ENCODE measurements at regions of chr12 and their contacts with region 1.

Region 1: DNA sequence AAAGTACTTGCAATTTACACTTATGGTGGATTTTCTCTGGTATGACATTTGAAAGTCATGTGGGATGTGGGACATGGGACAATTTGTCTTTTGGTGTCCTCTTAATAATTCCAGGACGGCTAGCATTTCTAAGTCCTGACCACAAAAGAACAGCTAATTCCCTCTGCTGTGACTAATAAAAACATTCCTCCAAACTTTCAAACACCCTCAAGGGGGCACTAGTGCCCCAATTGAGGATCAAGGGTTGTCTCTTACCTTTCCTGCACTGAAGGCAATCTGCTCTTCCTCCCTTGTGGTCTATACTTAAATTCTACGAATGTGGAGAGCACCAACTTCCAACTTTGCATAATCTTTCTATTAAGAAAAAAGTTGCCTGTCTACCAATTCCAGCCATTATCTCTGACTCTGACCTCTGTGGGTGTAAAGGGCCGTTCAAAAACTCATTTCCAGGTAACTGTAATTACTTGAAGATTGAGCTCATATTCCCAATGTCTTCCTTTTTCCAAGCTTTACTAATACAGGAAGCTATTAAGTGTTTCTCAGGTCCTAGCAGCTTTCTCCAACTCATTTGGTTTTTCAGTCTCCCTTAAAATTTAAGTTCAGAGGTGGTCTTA is 210.2 kb downstream of the PTPRO start:
- DNase-seq: peak; percentile 61
- H3K4me3 Mint-ChIP-seq: no peak overlapping the region
- H3K27ac Mint-ChIP-seq: no peak overlapping the region
- H3K4me1 Mint-ChIP-seq: peaks cover 9% of the 10 kb centered on the region
- H3K27me3 Mint-ChIP-seq: peaks cover 10% of the 10 kb centered on the region

Region 2: DNA sequence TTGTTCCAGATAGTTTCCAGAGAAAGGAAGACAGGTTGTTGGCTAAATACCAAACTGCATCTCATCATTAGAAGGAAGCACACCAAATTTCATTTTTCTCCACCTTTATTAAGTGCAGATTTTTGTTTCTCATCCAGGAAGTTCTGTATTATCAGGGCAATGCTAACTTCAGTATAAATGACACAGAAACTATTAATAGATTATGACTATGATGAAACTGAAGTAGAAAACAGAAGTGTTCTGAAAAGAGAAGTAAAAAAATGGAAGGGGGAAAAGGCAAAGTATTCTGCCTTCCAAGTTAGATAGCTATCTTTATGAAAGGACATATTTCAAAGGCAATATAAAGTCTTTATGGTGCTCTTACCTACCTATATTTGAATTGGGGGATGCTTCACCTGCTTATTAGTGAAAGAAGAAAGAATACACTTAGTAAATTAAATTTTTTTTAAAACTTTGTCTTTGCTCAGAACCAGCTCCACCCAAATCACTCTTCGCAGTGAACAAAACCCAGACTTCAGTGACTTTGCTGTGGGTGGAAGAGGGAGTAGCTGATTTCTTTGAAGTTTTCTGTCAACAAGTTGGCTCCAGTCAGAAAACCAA is 13.7 kb after region 1 on chr12:
- CTCF ChIA-PET with region 1: interaction called, 41 read pairs
- POLR2A ChIA-PET with region 1: interaction called, 10 read pairs
- DNase-seq: no peak
- H3K4me3 Mint-ChIP-seq: no peak overlapping the region
- H3K27ac Mint-ChIP-seq: peak overlapping the region; percentile 63
- H3K4me1 Mint-ChIP-seq: peaks cover 19% of the 10 kb centered on the region
- H3K27me3 Mint-ChIP-seq: peaks cover 2% of the 10 kb centered on the region

Region 3: DNA sequence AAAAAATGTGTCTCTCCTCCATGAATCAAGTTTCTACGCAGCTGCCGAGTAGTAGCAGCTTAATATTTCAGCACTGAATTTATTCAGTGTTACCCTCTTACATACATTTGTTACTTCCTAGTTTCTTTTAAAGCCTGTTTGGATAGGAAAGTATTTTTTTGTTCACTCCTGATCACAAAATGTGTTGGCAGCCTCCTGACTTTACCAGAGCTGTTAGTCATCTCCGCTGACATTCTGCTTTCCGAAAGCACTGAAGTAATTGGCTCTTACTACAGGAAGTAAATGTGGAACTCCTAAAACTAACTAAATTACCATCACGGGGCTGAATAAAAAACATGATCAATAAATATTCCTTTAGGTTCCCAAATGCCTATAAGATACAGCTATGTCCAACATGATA is 31.2 kb after region 1 on chr12:
- CTCF ChIA-PET with region 1: interaction called, 23 read pairs
- POLR2A ChIA-PET with region 1: interaction called, 24 read pairs
- DNase-seq: peak; percentile 32
- H3K4me3 Mint-ChIP-seq: peak overlapping the region; percentile 64
- H3K27ac Mint-ChIP-seq: peak overlapping the region; percentile 94
- H3K4me1 Mint-ChIP-seq: peaks cover 62% of the 10 kb centered on the region
- H3K27me3 Mint-ChIP-seq: no peaks in the 10 kb centered on the region

Region 4: GRCh38 chr12:15575671-15576541 is 43.4 kb after region 1 on chr12:
- CTCF ChIA-PET with region 1: interaction called, 373 read pairs
- POLR2A ChIA-PET with region 1: interaction called, 24 read pairs
- DNase-seq: no peak
- H3K4me3 Mint-ChIP-seq: no peak overlapping the region
- H3K27ac Mint-ChIP-seq: no peak overlapping the region
- H3K4me1 Mint-ChIP-seq: peaks cover 16% of the 10 kb centered on the region
- H3K27me3 Mint-ChIP-seq: no peaks in the 10 kb centered on the region

Region 5: GRCh38 chr12:15590180-15590826 is 57.8 kb after region 1 on chr12:
- CTCF ChIA-PET with region 1: interaction called, 373 read pairs
- POLR2A ChIA-PET with region 1: interaction called, 4 read pairs
- DNase-seq: peak; percentile 53
- H3K4me3 Mint-ChIP-seq: peak overlapping the region; percentile 53
- H3K27ac Mint-ChIP-seq: peak overlapping the region; percentile 1
- H3K4me1 Mint-ChIP-seq: peaks cover 11% of the 10 kb centered on the region
- H3K27me3 Mint-ChIP-seq: no peaks in the 10 kb centered on the region

Measured in activated CD4-positive, alpha-beta memory T cell treated with anti-CD3 and anti-CD28 coated beads, Interleukin-2, amount 10 ng/mL, durations not matched to agents 7 days and 5 days (primary cell).